ENCODE measurements at regions of chr1 and their contacts with region 1.

Region 1: DNA sequence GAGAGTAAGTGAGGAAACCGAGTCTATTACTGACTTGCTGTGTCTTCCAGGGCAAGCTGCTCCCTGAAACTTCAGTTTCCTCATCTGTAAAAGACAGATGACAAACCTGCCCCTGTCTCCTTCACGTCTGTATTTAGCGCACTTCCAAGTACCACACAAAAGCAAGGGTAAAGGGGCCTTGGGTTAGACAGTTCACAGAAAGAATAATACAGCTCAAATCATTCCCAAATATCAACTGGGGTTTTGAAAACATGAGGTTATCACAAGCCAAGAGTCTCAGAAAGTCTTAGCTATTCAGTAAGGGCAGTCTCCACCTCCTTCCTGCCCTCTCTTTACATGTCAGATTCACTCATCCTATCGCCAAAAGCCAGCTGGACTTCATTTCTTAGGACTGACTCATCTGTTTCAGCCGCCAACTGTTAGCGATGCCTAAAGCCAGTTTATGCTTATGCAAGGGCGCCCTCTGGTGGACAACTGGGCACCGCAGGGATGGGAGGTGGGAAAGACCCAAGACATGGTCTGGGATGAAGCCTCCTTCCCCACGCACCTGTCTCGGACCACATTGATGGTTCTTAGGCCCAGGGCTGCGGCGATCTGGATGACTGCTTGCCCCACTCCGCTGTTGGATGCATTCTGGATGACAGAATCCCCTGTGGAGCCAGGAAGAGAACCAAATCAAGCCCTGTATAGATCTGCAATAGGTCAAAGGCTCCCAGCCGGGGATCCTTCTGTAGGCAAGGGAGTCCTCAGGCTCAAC is 21.1 kb upstream of the SRSF4 start:
- DNase-seq: peak; percentile 58 to 91 (median 76)
- ATAC-seq: peak; percentile 94
- H3K4me3 ChIP-seq: no peak overlapping the region
- H3K4me3 Mint-ChIP-seq: no peak overlapping the region
- H3K27ac ChIP-seq: no peak overlapping the region
- H3K27ac Mint-ChIP-seq: no peak overlapping the region
- H3K4me1 ChIP-seq: no peaks in the 10 kb centered on the region
- H3K4me1 Mint-ChIP-seq: peaks cover 0 to 13% (median 3%) of the 10 kb centered on the region in 7 donors
- H3K27me3 ChIP-seq: no peaks in the 10 kb centered on the region
- H3K27me3 Mint-ChIP-seq: no peaks in the 10 kb centered on the region

Region 2: GRCh38 chr1:28782011-28782410 is 420.8 kb before region 1 on chr1:
- CTCF ChIA-PET with region 1: interaction called, 10 read pairs
- POLR2A ChIA-PET with region 1: no interaction called
- intact Hi-C with region 1: loop called (anchors 1 kb)
- DNase-seq: no peak
- ATAC-seq: no peak
- H3K4me3 ChIP-seq: no peak overlapping the region
- H3K4me3 Mint-ChIP-seq: no peak overlapping the region
- H3K27ac ChIP-seq: no peak overlapping the region
- H3K27ac Mint-ChIP-seq: peak overlapping the region in 1 of 9 donors; percentile 62
- H3K4me1 ChIP-seq: no peaks in the 10 kb centered on the region
- H3K4me1 Mint-ChIP-seq: peaks cover 0 to 10% (median 5%) of the 10 kb centered on the region in 7 donors
- H3K27me3 ChIP-seq: no peaks in the 10 kb centered on the region
- H3K27me3 Mint-ChIP-seq: peaks cover 0 to 10% (median 0%) of the 10 kb centered on the region in 5 donors

Region 3: DNA sequence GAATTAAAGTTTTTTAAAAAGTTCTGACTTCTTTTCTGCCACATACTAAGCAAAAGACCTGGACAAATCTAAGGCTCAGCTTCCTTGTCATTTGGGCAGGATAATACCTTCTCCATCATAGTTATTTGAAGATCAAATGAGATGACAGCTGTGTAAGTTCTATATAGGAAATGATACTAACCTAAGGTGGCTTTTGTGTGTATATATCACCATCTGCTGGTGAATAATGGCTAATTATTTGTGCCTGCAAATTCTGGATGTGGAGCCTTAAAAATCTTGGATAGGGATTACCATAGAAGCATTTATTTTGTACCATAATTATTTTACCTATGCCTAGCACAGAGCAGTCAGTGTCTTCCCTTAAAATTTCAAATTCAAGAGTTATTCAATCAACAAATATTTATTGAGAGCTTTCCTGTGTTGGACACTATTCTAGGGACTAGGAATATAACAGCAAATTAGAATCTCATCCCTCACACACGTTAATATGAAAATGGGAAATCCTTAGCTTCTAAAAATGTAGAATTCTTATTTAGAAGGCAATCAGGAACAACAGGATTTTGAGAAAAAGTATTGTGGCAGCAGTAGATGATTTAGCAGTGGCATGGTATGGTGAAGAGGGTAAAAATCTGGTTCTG is 168.8 kb before region 1 on chr1:
- CTCF ChIA-PET with region 1: interaction called, 3 read pairs
- POLR2A ChIA-PET with region 1: no interaction called
- intact Hi-C with region 1: loop called (anchors 1 to 2 kb)
- DNase-seq: peak in 7 of 9 donors; percentile 9 to 44 (median 30)
- ATAC-seq: peak; percentile 75
- H3K4me3 ChIP-seq: no peak overlapping the region
- H3K4me3 Mint-ChIP-seq: no peak overlapping the region
- H3K27ac ChIP-seq: no peak overlapping the region
- H3K27ac Mint-ChIP-seq: peak overlapping the region in 3 of 9 donors; percentile 18 to 64 (median 48)
- H3K4me1 ChIP-seq: no peaks in the 10 kb centered on the region
- H3K4me1 Mint-ChIP-seq: peaks cover 0 to 3% (median 0%) of the 10 kb centered on the region in 7 donors
- H3K27me3 ChIP-seq: no peaks in the 10 kb centered on the region
- H3K27me3 Mint-ChIP-seq: no peaks in the 10 kb centered on the region

Region 4: GRCh38 chr1:29124366-29125236 is 78.2 kb before region 1 on chr1:
- CTCF ChIA-PET with region 1: no interaction called
- POLR2A ChIA-PET with region 1: no interaction called
- intact Hi-C with region 1: loop called (anchors 1 to 2 kb)
- DNase-seq: peak; percentile 27 to 71 (median 46)
- ATAC-seq: peak; percentile 46
- H3K4me3 ChIP-seq: peak overlapping the region; percentile 48
- H3K4me3 Mint-ChIP-seq: peak overlapping the region; percentile 27 to 94 (median 74)
- H3K27ac ChIP-seq: no peak overlapping the region
- H3K27ac Mint-ChIP-seq: no peak overlapping the region
- H3K4me1 ChIP-seq: peaks cover 6 to 11% of the 10 kb centered on the region in 2 donors
- H3K4me1 Mint-ChIP-seq: peaks cover 3 to 14% (median 9%) of the 10 kb centered on the region in 7 donors
- H3K27me3 ChIP-seq: peaks cover 0 to 12% of the 10 kb centered on the region in 2 donors
- H3K27me3 Mint-ChIP-seq: peaks cover 9 to 41% (median 13%) of the 10 kb centered on the region in 5 donors

Region 5: GRCh38 chr1:30809514-30810263 is 1606.9 kb after region 1 on chr1:
- CTCF ChIA-PET with region 1: no interaction called
- POLR2A ChIA-PET with region 1: no interaction called
- intact Hi-C with region 1: no loop called
- DNase-seq: no peak
- ATAC-seq: no peak
- H3K4me3 ChIP-seq: no peak overlapping the region
- H3K4me3 Mint-ChIP-seq: no peak overlapping the region
- H3K27ac ChIP-seq: no peak overlapping the region
- H3K27ac Mint-ChIP-seq: no peak overlapping the region
- H3K4me1 ChIP-seq: no peaks in the 10 kb centered on the region
- H3K4me1 Mint-ChIP-seq: peaks cover 0 to 3% (median 0%) of the 10 kb centered on the region in 7 donors
- H3K27me3 ChIP-seq: peaks cover 0 to 5% of the 10 kb centered on the region in 2 donors
- H3K27me3 Mint-ChIP-seq: peaks cover 21 to 72% (median 46%) of the 10 kb centered on the region in 5 donors

Measured in naive thymus-derived CD4-positive, alpha-beta T cell (primary cell).